ENCODE measurements at regions of chr13 and their contacts with region 1.

Region 1: DNA sequence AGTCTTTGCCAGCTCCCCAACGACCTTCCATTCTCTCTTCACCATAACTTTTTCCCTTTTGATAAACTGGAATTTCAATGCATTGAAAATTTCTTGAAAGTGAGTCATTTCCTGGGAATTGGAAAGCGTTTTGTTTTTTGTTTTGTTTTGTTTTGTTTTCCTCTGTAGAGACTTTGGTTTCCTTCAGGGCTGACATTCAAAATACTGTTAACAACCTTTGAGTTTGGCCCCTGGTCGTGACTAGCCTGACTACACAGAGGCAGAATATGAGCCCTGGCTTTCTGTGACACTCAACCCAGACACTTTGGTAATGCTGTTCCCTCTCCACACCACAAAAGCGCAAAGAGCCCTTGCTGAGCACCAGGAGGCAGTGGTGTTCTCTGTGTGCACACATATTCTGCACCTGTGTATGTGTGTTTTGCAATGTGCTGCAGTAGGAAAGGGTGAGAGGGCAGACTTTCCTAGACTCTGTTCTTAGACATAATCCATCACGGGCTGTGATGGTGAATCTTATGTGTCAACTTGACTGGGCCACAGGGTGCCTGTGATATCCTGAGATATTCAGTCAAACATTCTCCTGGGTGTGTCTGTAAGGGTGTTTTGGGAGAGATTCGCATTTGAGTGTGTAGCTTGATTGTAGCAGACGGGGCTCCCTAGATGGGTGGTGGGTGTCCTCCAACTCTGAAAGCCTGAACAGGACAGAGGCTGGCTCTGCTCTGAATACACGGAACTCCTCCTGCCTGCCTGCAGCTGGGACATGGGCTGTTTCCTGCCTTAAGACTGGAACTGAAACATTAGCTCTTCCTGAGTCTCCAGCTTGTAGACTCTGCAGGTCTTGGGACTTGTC is 29.5 kb upstream of the ANKRD10 start:
- DNase-seq: peak; percentile 76
- H3K4me3 ChIP-seq: no peak overlapping the region
- H3K27ac ChIP-seq: no peak overlapping the region
- H3K4me1 ChIP-seq: peaks cover 7% of the 10 kb centered on the region
- H3K27me3 ChIP-seq: no peaks in the 10 kb centered on the region

Region 2: DNA sequence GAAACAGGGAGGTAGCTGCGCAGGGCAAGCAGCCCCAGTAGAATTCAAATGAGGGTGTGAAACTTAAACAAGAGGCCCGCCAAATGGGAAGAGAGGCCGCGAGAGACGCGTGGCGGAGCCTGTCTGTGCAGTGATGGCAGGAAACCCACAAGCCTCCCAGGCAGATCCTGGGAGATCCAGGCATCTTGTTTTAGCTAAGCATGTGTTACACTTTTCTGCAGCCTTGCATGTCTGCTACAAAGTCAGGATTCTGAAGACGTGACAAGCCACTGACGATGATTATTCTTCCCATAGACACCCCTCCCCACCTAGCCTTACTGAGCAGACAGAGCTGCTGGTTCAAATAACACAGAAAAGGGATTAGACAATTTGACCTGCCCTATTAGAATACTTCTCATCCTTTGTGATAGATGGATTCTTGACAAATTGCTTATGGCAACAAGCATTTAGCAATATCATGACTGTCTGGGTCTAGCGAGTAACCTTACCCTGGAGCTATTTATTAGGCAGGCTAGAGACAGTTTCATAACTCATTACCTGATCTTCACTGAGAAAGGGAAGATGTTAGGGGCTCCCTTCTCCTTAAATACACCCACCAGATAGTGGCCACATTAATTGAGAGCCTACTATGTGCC is 972.8 kb before region 1 on chr13:
- in situ Hi-C with region 1: no loop called
- DNase-seq: peak; percentile 30
- H3K4me3 ChIP-seq: no peak overlapping the region
- H3K27ac ChIP-seq: no peak overlapping the region
- H3K4me1 ChIP-seq: no peaks in the 10 kb centered on the region
- H3K27me3 ChIP-seq: no peaks in the 10 kb centered on the region; the same call in 1 of the 2 replicates

Region 3: GRCh38 chr13:111046590-111047141 is 102.3 kb after region 1 on chr13:
- in situ Hi-C with region 1: loop called (anchors 10 kb)
- DNase-seq: peak; percentile 64
- H3K4me3 ChIP-seq: no peak overlapping the region
- H3K27ac ChIP-seq: no peak overlapping the region
- H3K4me1 ChIP-seq: peaks cover 6% of the 10 kb centered on the region
- H3K27me3 ChIP-seq: no peaks in the 10 kb centered on the region

Region 4: GRCh38 chr13:111202745-111203144 is 258.4 kb after region 1 on chr13:
- in situ Hi-C with region 1: loop called (anchors 25 kb)
- DNase-seq: peak; percentile 62
- H3K4me3 ChIP-seq: no peak overlapping the region
- H3K27ac ChIP-seq: no peak overlapping the region
- H3K4me1 ChIP-seq: peaks cover 26% of the 10 kb centered on the region
- H3K27me3 ChIP-seq: no peaks in the 10 kb centered on the region